ENCODE measurements at regions of chr5 and their contacts with region 1.

Region 1: DNA sequence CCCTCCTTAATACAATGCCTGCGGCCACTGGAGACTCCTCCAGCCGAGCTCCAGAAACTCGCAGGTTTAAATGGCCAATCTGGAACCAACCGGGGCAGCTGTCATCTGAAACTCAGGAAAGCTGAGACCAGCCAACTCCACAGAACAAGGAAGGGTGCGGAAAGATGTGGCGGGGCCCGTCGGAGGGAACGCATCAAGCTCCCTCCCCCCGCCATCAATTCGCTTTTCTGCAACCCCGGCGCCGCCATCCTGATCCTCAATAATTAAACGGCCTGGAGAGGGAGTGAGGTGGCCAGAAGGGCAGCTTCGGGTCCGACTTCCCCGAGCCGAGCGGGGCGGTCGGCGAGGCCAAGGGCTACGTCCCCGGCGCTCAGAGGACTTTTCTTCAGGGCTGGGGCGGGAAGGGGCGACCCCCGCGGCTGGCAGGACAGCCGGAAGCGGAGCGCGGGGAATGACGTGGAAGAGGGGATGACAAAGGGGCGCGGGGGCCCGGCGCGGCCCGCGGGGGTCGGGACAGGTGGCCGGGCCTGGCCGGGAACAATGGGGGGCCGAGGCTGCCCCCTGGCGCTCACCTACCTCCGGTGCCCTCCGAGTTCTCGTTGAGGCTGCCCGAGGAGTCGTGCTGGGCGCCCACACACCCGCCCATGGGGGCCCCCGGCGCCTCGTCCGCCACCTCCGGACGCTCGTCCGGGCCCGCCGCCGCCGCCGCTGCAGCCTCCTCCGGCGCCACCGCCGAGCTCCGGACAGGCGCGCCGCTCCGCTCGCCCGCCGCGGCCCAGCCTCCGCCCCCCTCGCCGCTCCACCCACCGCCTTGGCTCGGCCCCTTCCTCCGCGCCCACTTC is at the start of gene UBTD2:
- DNase-seq: peak; percentile 66
- total RNA-seq, gene UBTD2: 17.2 and 18.3 TPM in 2 replicates

Region 2: DNA sequence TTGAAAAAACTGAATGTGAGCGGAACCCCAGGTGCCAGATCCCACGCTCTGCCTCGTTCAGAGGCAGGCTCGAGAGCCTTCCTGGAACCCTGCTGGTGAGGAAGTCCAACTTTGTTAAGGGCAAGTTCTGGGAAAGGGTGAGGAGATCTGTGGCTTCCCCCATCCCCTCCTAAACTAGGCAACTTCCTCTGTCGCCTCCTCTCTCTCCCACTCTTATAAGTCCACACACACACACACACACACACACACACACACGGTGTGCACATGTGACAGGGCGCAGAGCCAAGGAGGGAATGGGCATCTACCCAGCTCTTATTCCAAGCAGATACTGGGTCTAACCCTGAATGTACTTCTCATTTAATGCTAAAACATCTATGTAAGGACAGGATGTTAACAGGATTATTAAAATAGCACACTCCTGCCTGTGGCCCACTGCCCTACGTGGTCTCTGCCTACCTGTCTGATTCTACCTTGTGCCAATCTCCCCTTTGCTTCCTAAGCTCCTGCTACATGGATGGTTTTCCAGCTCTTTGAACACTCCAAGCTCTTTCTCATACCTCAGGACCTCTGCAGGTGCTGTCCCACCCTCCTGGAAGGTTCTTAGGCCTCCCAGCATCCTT is 204.4 kb before region 1 on chr5:
- in situ Hi-C with region 1: loop called (anchors 25 kb)
- DNase-seq: no peak

Region 3: DNA sequence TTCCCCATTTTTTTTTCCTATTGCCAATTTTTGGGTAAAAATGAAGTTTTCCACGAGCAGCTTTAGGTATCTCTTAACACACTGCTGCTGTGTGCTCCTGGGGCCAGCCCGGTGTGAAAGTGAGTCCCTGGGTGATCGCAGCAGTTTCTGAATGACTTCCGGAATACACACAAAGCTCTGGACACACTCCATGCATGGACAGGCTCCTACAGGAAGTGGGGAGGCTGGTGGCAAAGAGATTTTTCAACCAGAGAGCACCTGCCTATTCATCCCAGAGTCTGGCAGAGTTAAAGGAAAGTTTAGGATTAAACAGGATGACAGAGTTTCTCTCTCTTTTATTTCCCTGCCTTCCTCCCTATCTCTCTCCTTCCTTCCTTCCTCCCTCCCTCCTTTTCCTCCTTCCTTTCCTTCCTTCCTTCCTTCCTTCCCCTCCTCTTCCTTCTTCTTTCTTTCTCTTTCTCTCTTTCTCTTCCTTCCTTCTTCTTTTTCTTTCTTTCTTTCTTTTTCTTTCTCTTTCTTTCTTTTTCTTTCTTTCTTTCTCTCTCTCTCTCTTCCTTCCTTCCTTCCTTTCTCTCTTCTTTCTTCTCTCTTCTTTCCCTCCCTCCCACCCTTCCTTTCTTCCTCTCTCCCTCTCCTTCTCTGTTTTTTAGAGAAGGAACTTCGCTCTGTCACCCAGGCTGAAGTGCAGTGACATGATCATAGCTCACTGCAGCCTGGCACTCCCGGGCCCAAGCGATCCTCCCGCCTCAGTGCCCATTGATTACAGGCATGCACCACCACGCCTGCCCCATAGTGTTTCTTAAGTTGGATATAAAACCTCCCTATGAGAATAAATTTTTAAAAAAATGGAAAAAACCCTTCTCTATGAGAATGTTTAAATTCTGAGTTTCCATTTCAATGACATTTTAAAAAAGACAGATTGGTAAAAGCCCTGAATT is 39.1 kb after region 1 on chr5:
- in situ Hi-C with region 1: no loop called
- DNase-seq: no peak

Region 4: DNA sequence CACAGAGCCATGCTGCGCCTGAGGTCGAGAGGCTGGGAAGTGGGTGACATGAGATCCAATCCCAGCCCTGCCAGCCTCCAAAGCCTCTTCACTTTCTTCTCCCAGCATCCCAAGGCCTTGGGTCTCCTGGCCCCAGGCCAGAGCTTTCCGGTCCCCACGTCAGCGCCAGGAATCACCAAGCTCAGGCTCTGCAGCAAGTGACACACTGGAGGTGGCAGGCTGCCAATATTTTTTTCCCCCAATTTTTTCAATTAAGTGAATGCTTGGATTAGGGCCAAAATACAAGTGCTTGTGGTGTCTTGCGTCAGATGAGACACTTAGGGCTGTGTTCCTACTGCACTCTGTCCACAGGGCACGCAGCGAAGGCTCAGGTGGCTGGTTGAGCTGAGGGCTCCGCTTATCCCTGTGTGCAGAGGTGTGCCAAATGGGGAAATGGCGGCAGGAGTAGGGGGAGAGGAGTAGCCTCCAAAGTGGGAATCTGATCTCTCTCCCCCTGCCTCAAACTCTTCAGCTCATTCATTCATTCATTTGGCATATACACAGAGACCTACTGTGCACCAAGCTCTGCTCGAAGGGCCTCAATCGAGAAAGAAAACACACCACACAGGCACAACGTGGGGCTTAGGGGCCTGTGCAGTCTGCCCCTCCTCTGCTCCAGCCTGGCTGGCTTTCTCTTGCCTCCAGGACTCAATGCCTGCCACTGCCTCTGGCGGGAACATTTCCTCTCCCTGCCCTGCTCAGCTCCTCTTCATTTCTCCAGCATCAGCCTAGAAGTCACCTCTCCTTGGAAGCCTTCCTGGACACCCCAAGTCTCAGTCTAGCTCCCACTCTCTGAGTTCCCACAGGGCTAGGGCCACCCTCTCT is 154.4 kb after region 1 on chr5:
- in situ Hi-C with region 1: no loop called
- DNase-seq: peak; percentile 97